Left cardiac atrium (tissue), 4 donors: ENCODE measurements at regions of chr20 and their contacts with region 1.

Region 1: GRCh38 chr20:35269055-35269781 is 8.7 kb downstream of the MMP24OS start:
- DNase-seq: peak; percentile 68
- ATAC-seq: peak; percentile 55 to 65

Region 2: DNA sequence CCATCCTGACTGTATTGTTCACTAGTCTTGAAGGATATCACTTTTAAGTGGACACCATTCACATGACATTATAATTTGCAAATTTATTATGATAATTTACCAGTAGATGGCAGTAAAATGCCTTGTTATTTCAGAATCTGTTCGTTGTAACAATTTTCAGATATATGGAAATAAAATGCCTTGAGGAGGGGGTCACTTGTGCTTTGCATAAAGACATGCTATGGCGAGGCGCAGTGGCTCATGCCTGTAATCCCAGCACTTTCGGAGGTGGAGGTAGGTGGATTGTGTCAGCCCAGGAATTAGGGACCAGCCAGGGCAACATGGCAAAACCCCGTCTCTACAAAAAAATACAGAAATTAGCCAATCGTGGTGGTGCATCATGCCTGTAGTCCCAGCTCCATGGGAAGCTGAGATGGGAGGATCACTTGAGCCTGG is 434.7 kb before region 1 on chr20:
- intact Hi-C with region 1: loop called in 1 of 2 experiments (anchors 10 kb)
- DNase-seq: no peak
- ATAC-seq: peak; percentile 31 to 53